ENCODE measurements at regions of chr9 and their contacts with region 1.

Region 1: DNA sequence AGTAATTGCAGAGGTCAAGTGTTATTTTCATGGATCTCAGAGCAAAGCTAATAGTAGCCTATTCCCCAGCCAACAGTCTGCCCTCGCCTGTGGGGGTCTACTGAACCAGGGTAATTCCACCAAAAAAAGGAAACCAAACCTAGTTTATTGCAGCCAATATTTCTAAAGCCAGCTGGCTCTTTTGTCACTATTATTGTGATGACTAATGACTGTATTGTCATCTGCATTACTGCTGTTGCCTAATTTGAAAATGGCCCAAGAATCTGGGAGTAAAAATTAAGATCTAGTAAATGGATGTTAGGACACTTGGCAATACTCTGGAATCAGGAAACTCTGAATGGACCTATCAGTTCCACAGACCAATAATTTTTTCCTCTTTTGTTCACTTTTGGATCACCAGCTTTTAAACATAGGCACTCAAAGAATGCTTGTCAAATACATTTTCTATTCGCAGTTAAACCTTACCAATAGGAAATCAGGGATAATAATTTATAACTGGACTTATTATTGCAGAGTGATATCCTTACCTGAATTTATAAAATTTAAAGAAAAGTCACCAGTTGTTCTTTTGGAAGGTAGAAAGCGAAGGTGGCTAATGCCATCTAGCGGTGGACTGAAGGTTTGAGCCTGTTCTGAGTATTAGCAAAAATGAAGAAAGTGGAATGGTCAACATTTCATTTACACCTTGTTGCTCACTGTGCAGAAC is 69.2 kb downstream of the SYK start:
- DNase-seq: no peak
- ATAC-seq: peak in 2 of 4 donors; percentile 32 to 36
- H3K4me3 ChIP-seq: no peak overlapping the region
- H3K27ac ChIP-seq: no peak overlapping the region
- H3K4me1 ChIP-seq: peaks cover 0 to 9% (median 0%) of the 10 kb centered on the region in 12 donors
- H3K27me3 ChIP-seq: peaks cover 0 to 5% (median 0%) of the 10 kb centered on the region in 9 donors
- CTCF ChIP-seq: peak; percentile 72 to 93 (median 86)
- POLR2A ChIP-seq: no peak

Region 2: DNA sequence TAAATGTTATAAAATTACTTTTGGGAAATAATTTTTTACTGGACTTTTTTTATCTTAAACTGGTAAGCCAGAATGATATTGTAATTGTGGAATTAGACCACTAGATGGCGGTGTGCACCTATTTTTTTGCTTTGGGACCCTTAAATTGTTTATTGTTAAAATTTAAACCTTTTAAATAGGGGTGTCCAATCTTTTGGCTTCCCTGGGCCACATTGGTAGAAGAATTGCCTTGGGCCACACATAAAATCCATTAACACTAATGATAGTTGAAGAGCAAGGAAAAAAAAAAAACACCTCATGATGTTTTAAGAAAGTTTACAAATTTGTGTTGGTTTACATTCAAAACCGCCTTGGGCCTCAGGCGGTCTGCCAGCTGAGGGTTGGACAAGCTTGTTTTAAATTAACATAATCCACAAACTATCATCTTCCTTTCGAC is 1294.4 kb before region 1 on chr9:
- intact Hi-C with region 1: loop called in 2 of 10 experiments (anchors 5 to 10 kb)
- DNase-seq: no peak
- ATAC-seq: no peak
- H3K4me3 ChIP-seq: no peak overlapping the region
- H3K27ac ChIP-seq: no peak overlapping the region
- H3K4me1 ChIP-seq: peaks cover 0 to 15% (median 0%) of the 10 kb centered on the region in 12 donors
- H3K27me3 ChIP-seq: peaks cover 0 to 55% (median 7%) of the 10 kb centered on the region in 9 donors
- CTCF ChIP-seq: peak; percentile 65 to 85 (median 81)
- POLR2A ChIP-seq: no peak

Region 3: DNA sequence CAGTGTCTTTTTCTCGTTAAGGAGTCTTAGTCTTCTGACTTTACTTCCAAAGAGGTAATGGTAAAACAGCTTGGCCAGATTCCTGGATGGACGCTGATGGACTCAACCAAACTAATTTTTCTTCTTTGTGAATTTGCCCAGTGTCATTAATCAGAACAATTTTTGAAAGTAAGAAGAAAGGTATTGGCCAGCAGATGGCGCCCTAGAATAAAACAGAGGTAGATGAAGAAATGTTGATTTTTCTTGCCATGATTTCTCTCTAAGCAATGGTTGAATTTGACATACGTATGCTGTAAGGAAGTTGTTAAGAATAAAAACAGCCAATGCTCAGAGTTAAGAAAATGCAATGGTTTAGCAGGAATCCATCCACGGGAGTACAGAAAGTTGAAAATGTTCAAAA is 728.2 kb before region 1 on chr9:
- intact Hi-C with region 1: loop called (anchors 2 to 10 kb)
- DNase-seq: peak in 2 of 5 donors; percentile 17 to 42
- ATAC-seq: no peak
- H3K4me3 ChIP-seq: no peak overlapping the region
- H3K27ac ChIP-seq: no peak overlapping the region
- H3K4me1 ChIP-seq: no peaks in the 10 kb centered on the region
- H3K27me3 ChIP-seq: peaks cover 0 to 8% (median 0%) of the 10 kb centered on the region in 9 donors
- CTCF ChIP-seq: peak; percentile 50 to 67 (median 60)
- POLR2A ChIP-seq: no peak

Region 4: GRCh38 chr9:90219548-90220118 is 651.1 kb before region 1 on chr9:
- intact Hi-C with region 1: loop called in 3 of 10 experiments (anchors 10 kb)
- DNase-seq: peak in 1 of 5 donors; percentile 31
- ATAC-seq: peak in 1 of 4 donors; percentile 44
- H3K4me3 ChIP-seq: no peak overlapping the region
- H3K27ac ChIP-seq: no peak overlapping the region
- H3K4me1 ChIP-seq: no peaks in the 10 kb centered on the region
- H3K27me3 ChIP-seq: peaks cover 0 to 16% (median 6%) of the 10 kb centered on the region in 9 donors
- CTCF ChIP-seq: peak; percentile 23 to 50 (median 34)
- POLR2A ChIP-seq: no peak

Region 5: DNA sequence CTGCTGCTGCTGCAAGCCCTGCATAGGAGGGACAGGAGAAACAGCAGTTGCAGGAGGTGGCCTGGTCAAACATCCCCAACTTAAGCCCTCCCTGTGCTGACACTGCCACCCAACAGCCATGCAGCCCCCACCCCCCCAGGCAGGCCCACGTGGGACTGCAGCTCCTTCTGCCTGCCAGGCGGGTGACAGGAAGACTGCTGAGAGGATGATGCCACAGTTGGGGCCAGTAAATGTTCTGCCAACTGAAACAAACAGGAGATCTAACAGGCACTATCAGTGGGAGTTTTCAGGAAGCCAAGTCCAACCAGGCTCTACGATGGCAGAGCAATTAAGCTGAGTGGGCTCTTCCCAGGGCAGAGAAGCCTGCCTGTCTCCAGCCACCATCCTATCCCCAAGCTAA is 259.2 kb before region 1 on chr9:
- intact Hi-C with region 1: no loop called
- DNase-seq: no peak
- ATAC-seq: no peak
- H3K4me3 ChIP-seq: no peak overlapping the region
- H3K27ac ChIP-seq: no peak overlapping the region
- H3K4me1 ChIP-seq: no peaks in the 10 kb centered on the region
- H3K27me3 ChIP-seq: peaks cover 0 to 19% (median 0%) of the 10 kb centered on the region in 9 donors
- CTCF ChIP-seq: no peak
- POLR2A ChIP-seq: no peak

Region 6: DNA sequence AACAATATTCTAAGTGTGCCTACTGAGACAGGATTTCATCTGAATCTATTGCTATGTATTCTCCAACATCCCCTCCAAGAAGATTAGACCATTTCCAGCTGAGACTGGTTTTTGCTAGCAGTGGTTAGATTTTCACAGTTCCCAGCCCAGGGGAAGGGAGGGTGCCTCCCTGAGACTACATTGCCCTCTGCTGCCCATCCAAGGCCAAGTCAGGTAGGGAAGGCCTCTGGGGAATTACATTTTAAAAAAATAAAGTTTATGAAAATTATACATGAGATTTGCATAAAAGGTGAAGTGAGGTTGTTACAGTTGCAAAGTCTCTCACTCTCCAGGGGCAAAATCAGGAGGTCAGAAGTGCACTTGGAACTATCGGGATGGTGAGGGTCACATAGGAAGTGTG is 97.2 kb before region 1 on chr9:
- intact Hi-C with region 1: loop called in 1 of 10 experiments (anchors 5 kb)
- DNase-seq: no peak
- ATAC-seq: peak in 2 of 4 donors; percentile 55 to 68
- H3K4me3 ChIP-seq: no peak overlapping the region
- H3K27ac ChIP-seq: no peak overlapping the region
- H3K4me1 ChIP-seq: peaks cover 0 to 31% (median 0%) of the 10 kb centered on the region in 12 donors
- H3K27me3 ChIP-seq: peaks cover 0 to 9% (median 0%) of the 10 kb centered on the region in 9 donors
- CTCF ChIP-seq: peak in 9 of 12 donors; percentile 15 to 42 (median 28)
- POLR2A ChIP-seq: no peak

Region 7: GRCh38 chr9:90939347-90939746 is 68.6 kb after region 1 on chr9:
- intact Hi-C with region 1: no loop called
- DNase-seq: no peak
- ATAC-seq: no peak
- H3K4me3 ChIP-seq: no peak overlapping the region
- H3K27ac ChIP-seq: no peak overlapping the region
- H3K4me1 ChIP-seq: no peaks in the 10 kb centered on the region
- H3K27me3 ChIP-seq: peaks cover 0 to 2% (median 0%) of the 10 kb centered on the region in 9 donors
- CTCF ChIP-seq: no peak
- POLR2A ChIP-seq: no peak

Region 8: DNA sequence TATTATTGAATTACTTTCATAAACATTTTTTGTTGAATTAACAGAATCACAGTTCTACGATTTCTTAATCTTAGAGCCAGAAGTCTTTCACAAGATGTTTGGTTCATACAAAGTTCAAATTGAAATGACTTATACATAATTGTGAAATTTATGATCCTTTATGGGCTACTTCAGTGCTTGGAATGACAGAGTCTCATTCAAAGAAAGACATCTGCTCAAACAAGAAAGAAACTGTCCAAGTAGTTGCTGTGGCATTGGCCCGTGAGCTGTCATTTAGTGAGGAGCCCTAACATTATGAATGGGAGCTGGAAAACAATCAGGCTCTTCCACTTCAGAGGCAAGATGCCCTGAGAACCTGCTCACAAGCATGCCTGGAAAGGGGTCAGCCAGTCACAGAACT is 427.5 kb after region 1 on chr9:
- intact Hi-C with region 1: no loop called
- DNase-seq: no peak
- ATAC-seq: no peak
- H3K4me3 ChIP-seq: no peak overlapping the region
- H3K27ac ChIP-seq: peak overlapping the region in 2 of 12 donors; percentile 55 to 75
- H3K4me1 ChIP-seq: peaks cover 0 to 38% (median 15%) of the 10 kb centered on the region in 12 donors
- H3K27me3 ChIP-seq: no peaks in the 10 kb centered on the region
- CTCF ChIP-seq: no peak
- POLR2A ChIP-seq: no peak